ENCODE measurements at regions of chr10 and their contacts with region 1.

Region 1: DNA sequence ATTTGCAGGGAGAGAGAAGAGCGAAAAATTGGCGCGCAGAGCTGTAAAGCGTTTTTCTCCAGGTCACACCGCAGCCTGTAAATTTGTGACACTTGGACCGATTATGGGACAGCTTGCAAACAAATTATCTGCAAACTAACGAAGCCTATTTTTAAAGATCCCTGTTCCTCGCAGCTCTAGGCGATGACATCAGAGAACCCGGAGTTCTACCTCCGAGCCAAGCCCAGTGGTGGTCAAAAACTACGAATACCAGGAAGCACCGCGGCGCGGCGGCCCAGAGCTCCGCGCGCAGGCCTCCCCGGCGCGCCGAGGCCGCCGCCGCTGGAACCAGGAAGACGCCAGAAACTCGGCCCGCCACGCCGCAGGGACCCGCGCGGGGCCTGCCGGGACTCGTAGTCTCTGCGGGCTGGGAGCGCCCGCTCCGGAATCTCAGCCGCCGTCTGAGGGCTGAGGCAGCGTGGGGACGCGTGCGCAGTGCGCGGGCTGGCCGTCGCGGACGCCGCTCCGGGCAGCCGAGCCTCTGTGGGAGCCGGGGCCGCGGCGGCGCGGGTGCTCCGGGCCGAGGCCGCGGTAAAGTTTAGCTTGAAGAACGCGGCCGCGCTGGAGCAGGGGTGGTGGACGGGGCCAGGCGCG is at the start of gene PLEKHA1:
- DNase-seq: peak; percentile 90
- ATAC-seq: peak; percentile 89
- H3K4me3 Mint-ChIP-seq: peak within 1 kb of the TSS; percentile 93
- H3K27ac Mint-ChIP-seq: peak within 1 kb of the TSS; percentile 95
- H3K4me1 Mint-ChIP-seq: peaks cover 30% of the 10 kb centered on the region
- H3K27me3 Mint-ChIP-seq: peaks cover 23% of the 10 kb centered on the region
- CTCF ChIP-seq: no peak
- total RNA-seq, gene PLEKHA1: 11.8 and 12.8 TPM in 2 replicates

Region 2: GRCh38 chr10:120850911-120851865 is 1523.2 kb before region 1 on chr10 and contains the start of gene WDR11:
- CTCF ChIA-PET with region 1: no interaction called
- POLR2A ChIA-PET with region 1: no interaction called
- intact Hi-C with region 1: loop called (anchors 10 kb)
- DNase-seq: peak; percentile 75
- ATAC-seq: peak; percentile 92
- H3K4me3 Mint-ChIP-seq: peak within 1 kb of the TSS; percentile 99
- H3K27ac Mint-ChIP-seq: peak within 1 kb of the TSS; percentile 98
- H3K4me1 Mint-ChIP-seq: peaks cover 49% of the 10 kb centered on the region
- H3K27me3 Mint-ChIP-seq: no peaks in the 10 kb centered on the region
- CTCF ChIP-seq: no peak
- total RNA-seq, gene WDR11: 121 and 145 TPM in 2 replicates

Region 3: DNA sequence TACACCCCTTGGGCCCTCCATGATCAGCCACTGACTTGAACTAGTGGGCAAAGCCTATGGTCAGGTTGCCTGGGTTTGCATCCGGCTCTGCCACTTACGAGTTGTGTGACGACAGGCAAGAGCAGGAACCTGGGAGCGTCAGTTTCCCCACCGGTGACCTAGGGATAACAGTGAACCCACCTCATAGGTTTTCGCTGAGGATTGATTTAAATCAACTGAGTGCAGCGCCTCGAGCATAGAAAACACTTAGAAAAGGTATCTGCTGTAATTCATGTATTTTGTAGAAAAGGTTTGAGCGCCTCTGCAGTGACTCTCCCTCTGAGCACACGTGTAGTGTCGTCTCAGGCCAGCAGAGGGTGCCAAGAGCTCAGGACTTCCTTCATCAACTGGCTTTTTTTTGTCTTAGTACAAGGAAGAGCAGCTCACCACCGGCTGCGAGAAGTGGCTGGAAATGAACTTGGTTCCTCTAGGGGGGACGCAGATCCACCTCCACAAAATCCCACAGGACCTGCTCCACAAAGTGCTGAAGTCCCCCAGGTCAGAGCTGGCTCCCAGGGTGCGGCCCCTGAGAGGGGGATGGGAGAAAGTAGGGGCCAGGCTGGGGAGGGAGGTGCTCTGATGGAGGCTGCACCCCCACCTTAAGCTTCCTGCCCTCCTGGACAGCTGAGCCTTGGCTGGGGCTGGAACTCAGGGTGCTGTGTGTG is 75.6 kb before region 1 on chr10:
- CTCF ChIA-PET with region 1: interaction called, 5 read pairs
- POLR2A ChIA-PET with region 1: no interaction called
- intact Hi-C with region 1: loop called (anchors 2 kb)
- DNase-seq: peak; percentile 48
- ATAC-seq: peak; percentile 89
- H3K4me3 Mint-ChIP-seq: no peak overlapping the region
- H3K27ac Mint-ChIP-seq: no peak overlapping the region
- H3K4me1 Mint-ChIP-seq: peaks cover 2% of the 10 kb centered on the region
- H3K27me3 Mint-ChIP-seq: peaks cover 13% of the 10 kb centered on the region
- CTCF ChIP-seq: no peak

Region 4: GRCh38 chr10:122348512-122348911 is 25.8 kb before region 1 on chr10:
- CTCF ChIA-PET with region 1: interaction called, 5 read pairs
- POLR2A ChIA-PET with region 1: interaction called, 5 read pairs
- intact Hi-C with region 1: loop called (anchors 1 kb)
- DNase-seq: no peak
- ATAC-seq: peak; percentile 98
- H3K4me3 Mint-ChIP-seq: no peak overlapping the region
- H3K27ac Mint-ChIP-seq: no peak overlapping the region
- H3K4me1 Mint-ChIP-seq: peaks cover 17% of the 10 kb centered on the region
- H3K27me3 Mint-ChIP-seq: peaks cover 31% of the 10 kb centered on the region
- CTCF ChIP-seq: no peak

Region 5: GRCh38 chr10:122879339-122880273 is 505.3 kb after region 1 on chr10 and contains the start of gene FAM24B:
- CTCF ChIA-PET with region 1: no interaction called
- POLR2A ChIA-PET with region 1: no interaction called
- intact Hi-C with region 1: loop called (anchors 10 kb)
- DNase-seq: peak; percentile 83
- ATAC-seq: peak; percentile 85
- H3K4me3 Mint-ChIP-seq: peak within 1 kb of the TSS; percentile 85
- H3K27ac Mint-ChIP-seq: peak within 1 kb of the TSS; percentile 84
- H3K4me1 Mint-ChIP-seq: peaks cover 40% of the 10 kb centered on the region
- H3K27me3 Mint-ChIP-seq: no peaks in the 10 kb centered on the region
- CTCF ChIP-seq: no peak
- total RNA-seq, gene FAM24B: 7.3 and 10.0 TPM in 2 replicates

Region 6: GRCh38 chr10:123402656-123403055 is 1028.3 kb after region 1 on chr10:
- CTCF ChIA-PET with region 1: no interaction called
- POLR2A ChIA-PET with region 1: no interaction called
- intact Hi-C with region 1: loop called (anchors 10 kb)
- DNase-seq: no peak
- ATAC-seq: peak; percentile 92
- H3K4me3 Mint-ChIP-seq: peak overlapping the region; percentile 59
- H3K27ac Mint-ChIP-seq: peak overlapping the region; percentile 85
- H3K4me1 Mint-ChIP-seq: peaks cover 56% of the 10 kb centered on the region
- H3K27me3 Mint-ChIP-seq: no peaks in the 10 kb centered on the region
- CTCF ChIP-seq: no peak

Region 7: DNA sequence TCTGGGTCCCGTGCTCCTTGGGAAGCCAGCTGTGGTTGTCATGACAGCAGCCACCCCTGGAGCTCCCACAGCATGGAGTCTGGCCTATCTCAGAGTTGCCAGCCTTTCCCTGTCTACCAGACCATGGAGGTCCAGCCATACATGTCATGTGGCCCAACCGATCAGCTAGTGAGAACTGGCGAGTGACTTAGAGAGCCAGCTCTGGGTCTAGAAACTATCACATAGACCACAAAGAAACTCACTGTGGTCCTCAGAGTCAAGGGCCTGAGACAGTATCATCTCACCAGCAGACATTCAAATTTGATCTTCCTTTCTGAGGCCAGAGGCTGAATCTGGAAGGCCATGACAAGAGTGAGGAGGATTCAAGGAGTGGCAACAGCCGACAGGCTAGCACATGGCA is 1068.5 kb after region 1 on chr10:
- CTCF ChIA-PET with region 1: no interaction called
- POLR2A ChIA-PET with region 1: no interaction called
- intact Hi-C with region 1: no loop called
- DNase-seq: no peak
- ATAC-seq: no peak
- H3K4me3 Mint-ChIP-seq: no peak overlapping the region
- H3K27ac Mint-ChIP-seq: no peak overlapping the region
- H3K4me1 Mint-ChIP-seq: no peaks in the 10 kb centered on the region
- H3K27me3 Mint-ChIP-seq: peaks cover 2% of the 10 kb centered on the region
- CTCF ChIP-seq: no peak

Measured in activated B cell treated with CpG ODN at 0.5 μM for 24 hours (primary cell).